Heart right ventricle (tissue), 16 donors: ENCODE measurements at regions of chr15 and their contacts with region 1.

Region 1: DNA sequence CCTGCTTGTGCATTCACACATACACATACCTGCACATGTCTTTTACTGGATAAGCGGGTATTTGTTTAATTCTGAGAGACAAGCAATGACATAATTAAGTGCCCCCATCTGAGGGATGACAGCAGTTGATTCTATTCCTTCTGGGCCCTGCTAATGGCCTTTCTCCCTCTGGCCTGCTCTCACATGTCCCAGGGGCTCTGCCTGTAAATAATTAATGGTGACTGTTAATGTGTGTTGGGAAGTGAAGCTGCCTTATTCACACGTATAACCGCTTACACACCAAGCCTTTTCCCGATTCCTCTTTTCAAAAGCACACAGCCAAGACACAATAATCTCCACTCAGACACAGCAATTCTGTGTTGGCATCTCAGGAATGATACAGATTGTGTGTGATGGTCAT is 47.8 kb downstream of the LRRK1 start:
- DNase-seq: no peak
- ATAC-seq: no peak
- H3K4me3 ChIP-seq: no peak overlapping the region
- H3K27ac ChIP-seq: no peak overlapping the region
- H3K4me1 ChIP-seq: no peaks in the 10 kb centered on the region
- H3K27me3 ChIP-seq: peaks cover 0 to 13% (median 10%) of the 10 kb centered on the region in 7 donors
- CTCF ChIP-seq: no peak

Region 2: GRCh38 chr15:100733101-100733788 is 233.8 kb before region 1 on chr15:
- intact Hi-C with region 1: no loop called
- DNase-seq: no peak
- ATAC-seq: peak in 5 of 8 donors; percentile 22 to 54 (median 48)
- H3K4me3 ChIP-seq: no peak overlapping the region
- H3K27ac ChIP-seq: no peak overlapping the region
- H3K4me1 ChIP-seq: peaks cover 0 to 15% (median 11%) of the 10 kb centered on the region in 9 donors
- H3K27me3 ChIP-seq: peaks cover 0 to 3% (median 0%) of the 10 kb centered on the region in 7 donors
- CTCF ChIP-seq: no peak

Region 3: DNA sequence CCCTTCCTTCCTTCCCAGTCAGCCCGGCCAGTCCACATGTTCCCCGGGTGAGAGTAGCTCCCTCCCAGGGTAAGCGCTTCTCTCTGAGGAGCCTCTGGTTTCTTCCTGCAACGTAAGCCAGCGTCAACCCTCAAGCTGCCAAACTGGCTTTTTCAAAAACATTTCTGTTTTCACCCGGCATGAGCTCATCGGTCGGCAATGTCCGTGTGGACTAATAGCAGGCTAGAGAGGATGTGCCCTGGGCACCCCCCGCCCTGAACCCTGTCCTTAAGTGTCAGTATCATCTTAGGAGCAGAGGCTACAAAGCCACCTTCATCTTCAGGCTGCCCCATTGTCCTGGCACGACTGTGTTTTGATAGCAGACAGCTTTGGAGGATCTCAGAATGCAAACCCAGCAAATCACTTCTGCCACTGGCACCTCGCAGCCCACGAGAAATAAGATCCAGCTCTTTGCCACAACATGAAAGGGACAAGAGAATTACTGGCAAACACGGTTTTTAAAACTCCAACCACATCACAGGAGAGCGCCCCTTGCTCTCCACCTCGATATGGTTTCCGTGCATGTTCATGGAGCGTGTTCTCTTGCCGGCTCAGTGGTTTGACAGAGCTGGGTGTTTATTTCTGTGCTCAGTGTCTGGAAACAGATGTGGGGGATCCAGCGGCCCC is 77.5 kb before region 1 on chr15:
- intact Hi-C with region 1: loop called in 1 of 10 experiments (anchors 2 kb)
- DNase-seq: peak in 1 of 2 donors; percentile 53
- ATAC-seq: peak; percentile 56 to 85 (median 75)
- H3K4me3 ChIP-seq: no peak overlapping the region
- H3K27ac ChIP-seq: peak overlapping the region in 5 of 10 donors; percentile 8 to 43 (median 29)
- H3K4me1 ChIP-seq: peaks cover 0 to 21% (median 12%) of the 10 kb centered on the region in 9 donors
- H3K27me3 ChIP-seq: peaks cover 0 to 89% (median 58%) of the 10 kb centered on the region in 7 donors
- CTCF ChIP-seq: no peak